ENCODE measurements at regions of chr18 and their contacts with region 1.

Region 1: GRCh38 chr18:3281456-3282400 is 19.8 kb downstream of the MYL12B start:
- DNase-seq: peak; percentile 80
- H3K4me3 Mint-ChIP-seq: no peak overlapping the region
- H3K27ac Mint-ChIP-seq: no peak overlapping the region
- H3K4me1 Mint-ChIP-seq: peaks cover 6% of the 10 kb centered on the region
- H3K27me3 Mint-ChIP-seq: no peaks in the 10 kb centered on the region
- CTCF ChIP-seq: peak; percentile 52

Region 2: GRCh38 chr18:3074087-3074486 is 207.6 kb before region 1 on chr18:
- CTCF ChIA-PET with region 1: no interaction called
- POLR2A ChIA-PET with region 1: no interaction called
- intact Hi-C with region 1: no loop called
- DNase-seq: no peak
- H3K4me3 Mint-ChIP-seq: no peak overlapping the region
- H3K27ac Mint-ChIP-seq: no peak overlapping the region
- H3K4me1 Mint-ChIP-seq: no peaks in the 10 kb centered on the region
- H3K27me3 Mint-ChIP-seq: no peaks in the 10 kb centered on the region
- CTCF ChIP-seq: no peak

Region 3: GRCh38 chr18:3217948-3218647 is 63.6 kb before region 1 on chr18:
- CTCF ChIA-PET with region 1: no interaction called
- POLR2A ChIA-PET with region 1: no interaction called
- intact Hi-C with region 1: no loop called
- DNase-seq: peak; percentile 36
- H3K4me3 Mint-ChIP-seq: no peak overlapping the region
- H3K27ac Mint-ChIP-seq: peak overlapping the region; percentile 32
- H3K4me1 Mint-ChIP-seq: peaks cover 7% of the 10 kb centered on the region
- H3K27me3 Mint-ChIP-seq: no peaks in the 10 kb centered on the region
- CTCF ChIP-seq: no peak

Region 4: DNA sequence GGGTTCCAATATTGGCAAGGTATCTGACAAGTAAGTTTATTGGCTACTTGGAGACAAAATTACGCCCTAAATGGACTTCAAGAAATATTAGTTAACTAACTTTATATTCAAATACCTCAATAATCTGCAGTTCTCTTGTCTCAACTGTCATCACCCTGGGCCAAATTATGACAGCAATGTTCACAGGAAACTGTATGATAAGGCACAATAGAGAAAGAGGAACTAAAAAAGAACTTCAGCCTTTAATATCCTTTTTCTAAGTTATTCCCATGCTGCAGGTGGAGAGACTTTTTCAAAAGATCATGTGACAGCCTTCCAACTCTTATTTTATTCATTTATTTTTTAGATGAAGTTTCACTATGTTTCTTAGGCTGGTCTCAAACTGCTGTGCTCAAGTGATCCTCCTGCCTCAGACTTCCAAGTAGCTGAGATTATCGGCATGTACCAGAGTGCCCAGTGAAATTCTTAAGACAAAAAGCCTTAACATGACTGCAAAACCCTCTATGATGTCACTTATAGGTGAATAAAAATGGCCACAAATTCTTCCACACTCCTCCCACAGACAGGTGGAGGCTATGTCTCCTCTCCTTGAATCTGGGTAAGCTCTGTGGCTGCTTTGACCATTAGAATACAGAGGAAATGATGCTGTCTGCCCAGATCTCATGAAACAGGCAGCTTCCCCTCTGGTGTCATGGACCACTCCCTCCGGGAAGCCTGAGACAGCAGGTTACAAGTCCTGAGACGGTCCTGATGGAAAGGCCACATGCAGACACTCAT is 379.2 kb after region 1 on chr18:
- CTCF ChIA-PET with region 1: interaction called, 106 read pairs
- POLR2A ChIA-PET with region 1: interaction called, 34 read pairs
- intact Hi-C with region 1: loop called (anchors 1 kb)
- DNase-seq: no peak
- H3K4me3 Mint-ChIP-seq: no peak overlapping the region
- H3K27ac Mint-ChIP-seq: no peak overlapping the region
- H3K4me1 Mint-ChIP-seq: peaks cover 13% of the 10 kb centered on the region
- H3K27me3 Mint-ChIP-seq: no peaks in the 10 kb centered on the region
- CTCF ChIP-seq: no peak

Measured in MCF 10A (cell line).